Activated CD4-positive, alpha-beta T cell treated with anti-CD3 and anti-CD28 coated beads, Interleukin-2, amount 10 ng/mL, durations not matched to agents 24 days and 14 days (primary cell): ENCODE measurements at regions of chr11 and their contacts with region 1.

Region 1: GRCh38 chr11:10709299-10710086 is 15.9 kb upstream of the IRAG1 start:
- DNase-seq: no peak
- H3K4me3 Mint-ChIP-seq: no peak overlapping the region
- H3K27ac Mint-ChIP-seq: no peak overlapping the region
- H3K4me1 Mint-ChIP-seq: no peaks in the 10 kb centered on the region
- H3K27me3 Mint-ChIP-seq: peaks cover 2% of the 10 kb centered on the region

Region 2: GRCh38 chr11:10669258-10670033 is 40.0 kb before region 1 on chr11:
- intact Hi-C with region 1: loop called (anchors 5 kb)
- DNase-seq: no peak
- H3K4me3 Mint-ChIP-seq: no peak overlapping the region
- H3K27ac Mint-ChIP-seq: no peak overlapping the region
- H3K4me1 Mint-ChIP-seq: peaks cover 3% of the 10 kb centered on the region
- H3K27me3 Mint-ChIP-seq: peaks cover 32% of the 10 kb centered on the region